ENCODE measurements at regions of chrX and their contacts with region 1.

Region 1: GRCh38 chrX:19811807-19812604 is 75.4 kb downstream of the SH3KBP1 start:
- DNase-seq: no peak
- ATAC-seq: no peak

Region 2: DNA sequence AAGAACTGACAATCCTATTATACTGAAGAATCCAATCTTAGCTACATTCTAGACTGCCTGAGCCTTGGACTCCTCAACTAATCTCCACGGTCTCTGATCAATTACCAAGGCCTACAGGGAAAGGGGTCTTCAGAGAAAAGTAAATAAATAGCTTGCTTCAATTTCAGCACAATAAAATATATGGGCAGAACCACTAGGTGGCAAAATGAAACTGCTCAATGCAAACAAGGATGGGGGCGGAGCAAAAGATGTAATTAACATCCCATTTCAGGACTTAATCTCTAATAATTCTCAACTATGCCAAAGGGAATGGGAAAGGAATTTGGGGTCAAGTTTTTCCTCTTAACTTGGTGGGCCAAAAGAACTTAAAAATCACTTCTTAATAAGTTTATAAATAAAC is 218.3 kb before region 1 on chrX:
- intact Hi-C with region 1: no loop called
- DNase-seq: no peak
- ATAC-seq: peak; percentile 69

Region 3: DNA sequence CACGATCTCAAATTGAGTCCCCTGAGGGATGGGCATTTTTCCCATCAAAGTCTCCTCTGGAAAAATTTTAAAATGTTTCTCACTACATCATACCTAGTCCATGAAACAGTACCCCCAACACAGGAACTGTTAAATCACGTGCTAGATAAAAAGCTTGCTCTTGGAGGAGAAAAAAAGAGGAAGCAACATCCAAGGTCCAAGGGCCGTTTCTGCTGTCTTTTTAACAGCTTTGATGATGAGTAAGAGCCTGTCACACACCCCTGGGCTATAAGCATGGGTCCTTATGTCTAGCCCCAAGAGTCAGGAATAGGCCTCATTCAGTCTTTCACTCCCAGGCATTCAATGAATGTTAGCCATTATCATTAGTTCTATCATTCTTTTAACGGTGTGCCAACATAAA is 53.5 kb before region 1 on chrX:
- intact Hi-C with region 1: no loop called
- DNase-seq: no peak
- ATAC-seq: no peak

Region 4: GRCh38 chrX:19863212-19863856 is 51.3 kb after region 1 on chrX:
- intact Hi-C with region 1: loop called (anchors 10 kb)
- DNase-seq: no peak
- ATAC-seq: no peak

Region 5: DNA sequence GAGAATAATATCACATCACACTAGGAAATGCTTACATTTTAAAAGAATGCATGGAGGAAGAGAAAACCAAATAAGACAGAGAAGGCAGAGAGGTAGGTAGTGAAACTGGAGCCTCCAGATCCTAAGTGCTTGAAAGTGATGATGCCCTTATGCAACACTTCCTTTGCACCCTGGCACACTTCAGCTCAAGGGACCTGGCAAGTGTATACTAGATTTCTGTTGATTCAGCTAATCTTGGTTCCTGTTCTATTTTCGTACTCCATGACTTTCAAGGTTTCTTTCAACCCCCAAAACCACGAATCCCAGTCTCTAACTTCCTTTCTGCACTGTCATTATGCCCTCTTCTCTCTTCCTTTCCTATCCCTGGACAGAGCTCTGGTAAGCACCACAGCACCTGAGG is 112.3 kb after region 1 on chrX:
- intact Hi-C with region 1: no loop called
- DNase-seq: no peak
- ATAC-seq: no peak

Measured in Right ventricle myocardium superior (tissue), 1 donor.